ENCODE measurements at regions of chr13 and their contacts with region 1.

Region 1: DNA sequence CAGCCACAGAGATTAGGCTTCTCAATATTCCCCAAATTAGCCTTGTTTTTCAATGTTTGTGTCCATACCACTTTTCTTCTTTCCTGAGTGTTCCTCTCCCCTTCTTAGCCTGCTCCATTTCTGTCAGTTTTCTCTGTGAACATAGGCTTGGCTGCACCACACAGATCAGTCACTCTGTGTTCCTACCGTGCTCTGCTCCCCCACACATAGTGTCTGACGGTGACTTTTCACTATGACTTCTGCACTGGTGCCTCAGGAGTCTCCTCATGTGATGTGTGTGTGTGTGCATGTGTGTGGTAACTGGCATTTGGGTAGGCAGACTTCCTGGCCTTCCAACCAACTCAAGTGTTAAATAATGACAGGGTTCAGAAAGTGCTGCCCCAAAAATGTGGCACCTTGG is 47.9 kb upstream of the MYCBP2 start:
- DNase-seq: no peak
- ATAC-seq: no peak
- H3K4me3 ChIP-seq: no peak overlapping the region
- H3K27ac ChIP-seq: no peak overlapping the region
- H3K4me1 ChIP-seq: no peaks in the 10 kb centered on the region
- H3K27me3 ChIP-seq: no peaks in the 10 kb centered on the region
- CTCF ChIP-seq: no peak
- EP300 ChIP-seq: no peak
- POLR2A ChIP-seq: no peak
- RAD21 ChIP-seq: no peak

Region 2: GRCh38 chr13:77176350-77176749 is 198.4 kb before region 1 on chr13:
- CTCF ChIA-PET with region 1: no interaction called
- POLR2A ChIA-PET with region 1: no interaction called
- in situ Hi-C with region 1: no loop called
- intact Hi-C with region 1: no loop called
- DNase-seq: peak; percentile 3
- ATAC-seq: no peak
- H3K4me3 ChIP-seq: no peak overlapping the region
- H3K27ac ChIP-seq: no peak overlapping the region
- H3K4me1 ChIP-seq: no peaks in the 10 kb centered on the region
- H3K27me3 ChIP-seq: no peaks in the 10 kb centered on the region
- CTCF ChIP-seq: no peak
- EP300 ChIP-seq: no peak
- POLR2A ChIP-seq: no peak
- RAD21 ChIP-seq: no peak

Region 3: DNA sequence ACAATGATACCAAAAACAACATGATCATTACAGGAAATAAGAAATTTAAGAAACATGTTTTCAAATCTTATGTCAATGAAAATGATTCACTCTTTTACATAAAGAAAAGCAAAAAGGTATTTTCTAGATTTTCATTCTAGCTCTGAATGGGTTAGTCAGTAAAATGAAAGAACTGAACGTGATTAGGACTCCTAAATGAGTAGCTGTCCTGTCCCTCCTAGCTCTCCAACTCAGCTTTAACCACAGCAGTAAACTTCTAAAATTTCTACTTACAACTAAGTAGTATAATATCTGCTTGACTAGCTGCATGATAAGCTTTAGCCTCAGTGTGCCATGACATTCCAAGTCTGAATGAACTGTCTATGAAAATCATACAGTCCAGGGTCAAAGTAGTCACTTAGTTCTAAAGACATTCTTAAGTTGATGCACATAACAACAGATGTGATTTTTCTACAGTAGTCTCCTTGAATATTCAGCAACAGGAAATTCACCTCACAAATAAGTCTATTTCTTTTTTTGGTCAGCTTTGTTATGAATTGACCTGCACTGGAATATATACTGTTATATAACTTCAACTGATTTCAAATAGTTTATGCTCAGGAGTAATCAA is 184.3 kb before region 1 on chr13:
- CTCF ChIA-PET with region 1: no interaction called
- POLR2A ChIA-PET with region 1: no interaction called
- in situ Hi-C with region 1: no loop called
- intact Hi-C with region 1: no loop called
- DNase-seq: no peak
- ATAC-seq: no peak
- H3K4me3 ChIP-seq: no peak overlapping the region
- H3K27ac ChIP-seq: no peak overlapping the region
- H3K4me1 ChIP-seq: no peaks in the 10 kb centered on the region
- H3K27me3 ChIP-seq: no peaks in the 10 kb centered on the region
- CTCF ChIP-seq: no peak
- EP300 ChIP-seq: no peak
- POLR2A ChIP-seq: no peak
- RAD21 ChIP-seq: no peak

Region 4: GRCh38 chr13:77351315-77351714 is 23.5 kb before region 1 on chr13:
- CTCF ChIA-PET with region 1: no interaction called
- POLR2A ChIA-PET with region 1: no interaction called
- in situ Hi-C with region 1: no loop called
- intact Hi-C with region 1: loop called (anchors 2 kb)
- DNase-seq: no peak
- ATAC-seq: no peak
- H3K4me3 ChIP-seq: no peak overlapping the region
- H3K27ac ChIP-seq: no peak overlapping the region
- H3K4me1 ChIP-seq: no peaks in the 10 kb centered on the region
- H3K27me3 ChIP-seq: no peaks in the 10 kb centered on the region
- CTCF ChIP-seq: no peak
- EP300 ChIP-seq: no peak
- POLR2A ChIP-seq: no peak
- RAD21 ChIP-seq: no peak